ENCODE measurements at regions of chr4 and their contacts with region 1.

Region 1: GRCh38 chr4:183098723-183099536 is at the start of gene WWC2:
- DNase-seq: peak; percentile 96
- H3K4me3 ChIP-seq: peak within 1 kb of the TSS; percentile 82
- H3K4me3 Mint-ChIP-seq: peak within 1 kb of the TSS; percentile 83
- H3K27ac Mint-ChIP-seq: peak within 1 kb of the TSS; percentile 92
- H3K4me1 ChIP-seq: peaks cover 37% of the 10 kb centered on the region
- H3K4me1 Mint-ChIP-seq: peaks cover 40% of the 10 kb centered on the region
- H3K27me3 ChIP-seq: no peaks in the 10 kb centered on the region
- H3K27me3 Mint-ChIP-seq: no peaks in the 10 kb centered on the region
- CTCF ChIP-seq: no peak
- total RNA-seq, gene WWC2: 120 and 126 TPM in 2 replicates

Region 2: DNA sequence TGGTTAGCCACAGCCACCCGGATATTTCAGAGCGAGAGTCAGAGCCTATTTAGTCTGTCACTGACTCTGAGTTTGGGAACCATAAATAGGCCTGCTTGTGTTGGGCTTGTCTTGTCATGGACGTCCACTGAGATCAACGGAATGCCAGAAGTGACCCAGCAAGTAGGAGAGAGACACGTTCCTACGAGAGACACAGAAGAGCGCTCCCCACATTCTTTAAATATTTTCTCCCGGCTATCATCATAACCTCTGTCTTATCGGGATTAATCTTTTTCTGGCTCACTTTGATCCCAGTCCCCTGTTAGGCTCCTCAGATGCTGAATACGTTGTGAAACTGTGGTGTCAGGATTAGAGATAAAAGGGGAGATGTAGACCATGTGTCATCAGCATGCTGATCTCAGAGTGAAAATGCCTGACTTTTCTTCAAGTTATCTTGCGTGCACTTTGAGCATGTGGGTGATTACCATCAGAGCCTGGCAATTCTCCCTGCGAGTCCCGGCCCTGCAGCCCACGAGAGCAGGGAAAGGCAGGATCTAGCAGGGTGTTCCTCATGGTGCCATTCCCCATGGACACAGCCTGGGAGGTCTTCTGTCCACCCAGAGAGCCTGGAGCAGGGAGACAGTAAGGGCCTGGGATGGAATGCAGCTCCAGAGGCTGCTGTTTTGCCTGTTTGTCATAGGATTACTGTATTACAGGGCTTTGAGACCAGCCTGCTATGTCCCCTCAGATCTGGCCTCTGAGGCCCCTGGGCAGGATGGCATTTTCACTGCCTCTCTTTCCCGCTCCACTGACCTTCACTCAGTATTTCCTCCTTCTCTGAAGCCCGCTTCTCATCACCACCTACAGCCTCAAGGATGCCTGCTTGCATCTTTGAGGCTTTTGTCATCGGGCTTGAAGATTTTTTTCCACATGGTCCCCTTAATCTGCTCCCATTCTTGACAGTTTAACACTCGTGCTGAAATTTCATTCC is 858.5 kb before region 1 on chr4:
- CTCF ChIA-PET with region 1: no interaction called
- POLR2A ChIA-PET with region 1: no interaction called
- intact Hi-C with region 1: loop called (anchors 1 kb)
- DNase-seq: peak; percentile 83 to 90
- H3K4me3 ChIP-seq: peak overlapping the region; percentile 21
- H3K4me3 Mint-ChIP-seq: peak overlapping the region; percentile 45
- H3K27ac Mint-ChIP-seq: peak overlapping the region; percentile 96
- H3K4me1 ChIP-seq: peaks cover 57% of the 10 kb centered on the region
- H3K4me1 Mint-ChIP-seq: peaks cover 45% of the 10 kb centered on the region
- H3K27me3 ChIP-seq: no peaks in the 10 kb centered on the region
- H3K27me3 Mint-ChIP-seq: no peaks in the 10 kb centered on the region
- CTCF ChIP-seq: no peak

Region 3: DNA sequence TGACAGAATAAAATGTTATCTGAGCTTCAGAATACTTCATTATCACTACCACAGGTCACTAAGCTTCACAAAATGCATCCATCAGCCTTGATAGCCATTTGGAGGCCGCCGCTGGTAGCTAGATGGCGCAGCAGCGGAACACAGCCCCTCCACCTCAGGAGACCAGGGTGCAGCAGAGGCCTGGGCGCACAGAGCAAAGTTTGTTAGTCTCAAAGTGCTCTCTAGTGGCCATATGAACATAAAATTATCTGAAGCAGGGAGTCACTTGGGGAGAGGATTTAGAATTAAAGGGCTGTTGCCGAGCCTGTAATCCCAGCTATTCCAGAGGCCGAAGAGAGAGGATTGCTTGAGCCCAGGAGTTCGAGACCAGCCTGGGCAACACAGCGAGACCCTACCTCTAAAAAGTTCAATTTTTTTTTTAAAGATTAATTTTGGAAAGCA is 173.6 kb before region 1 on chr4:
- CTCF ChIA-PET with region 1: no interaction called
- POLR2A ChIA-PET with region 1: no interaction called
- intact Hi-C with region 1: no loop called
- DNase-seq: peak; percentile 78 to 84
- H3K4me3 ChIP-seq: no peak overlapping the region
- H3K4me3 Mint-ChIP-seq: no peak overlapping the region
- H3K27ac Mint-ChIP-seq: no peak overlapping the region
- H3K4me1 ChIP-seq: 0 out of 2 replicates have a peak, but pooled peaks cover 7% of the 10 kb centered on the region
- H3K4me1 Mint-ChIP-seq: no peaks in the 10 kb centered on the region
- H3K27me3 ChIP-seq: no peaks in the 10 kb centered on the region
- H3K27me3 Mint-ChIP-seq: no peaks in the 10 kb centered on the region
- CTCF ChIP-seq: peak; percentile 80 to 87

Region 4: DNA sequence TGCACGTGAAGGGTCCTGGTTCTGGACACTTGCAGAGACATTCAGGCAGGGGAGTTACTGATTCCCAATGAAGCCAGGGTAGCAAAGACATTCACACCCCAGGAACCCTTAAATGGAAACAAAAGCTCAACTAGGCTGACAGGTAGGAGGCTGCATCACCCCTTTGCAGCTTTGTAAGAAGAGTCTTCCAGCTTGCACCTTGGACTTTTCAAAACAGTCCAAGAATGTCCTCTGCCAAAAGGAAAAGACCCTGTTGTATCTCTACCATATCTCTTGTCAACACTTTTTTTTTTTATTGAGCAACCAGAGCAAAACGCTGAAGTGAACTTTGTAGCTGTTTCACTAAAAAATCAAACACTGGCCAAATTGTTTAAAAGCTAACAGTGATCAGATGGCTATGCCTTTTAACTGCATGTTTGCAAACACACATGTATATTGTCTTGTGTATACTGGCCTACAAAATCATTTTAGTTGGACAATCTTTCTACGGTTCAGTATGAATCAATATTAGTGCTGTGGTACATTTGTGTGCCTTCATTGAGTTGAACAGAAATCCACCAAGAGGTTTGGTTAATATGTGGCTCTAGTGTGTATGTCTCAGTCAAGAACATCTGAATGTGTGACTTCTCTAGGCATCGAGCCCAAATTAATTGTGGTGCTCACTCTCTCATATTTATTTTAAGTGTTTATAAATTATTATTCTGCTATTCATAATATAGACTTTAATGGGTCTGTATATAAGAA is 18.4 kb before region 1 on chr4:
- CTCF ChIA-PET with region 1: interaction called, 10 read pairs
- POLR2A ChIA-PET with region 1: interaction called, 19 read pairs
- intact Hi-C with region 1: loop called (anchors 1 kb)
- DNase-seq: peak; percentile 53 to 54
- H3K4me3 ChIP-seq: no peak overlapping the region
- H3K4me3 Mint-ChIP-seq: peak overlapping the region; percentile 14
- H3K27ac Mint-ChIP-seq: peak overlapping the region; percentile 18
- H3K4me1 ChIP-seq: peaks cover 61% of the 10 kb centered on the region
- H3K4me1 Mint-ChIP-seq: peaks cover 45% of the 10 kb centered on the region
- H3K27me3 ChIP-seq: no peaks in the 10 kb centered on the region
- H3K27me3 Mint-ChIP-seq: no peaks in the 10 kb centered on the region
- CTCF ChIP-seq: no peak

Region 5: DNA sequence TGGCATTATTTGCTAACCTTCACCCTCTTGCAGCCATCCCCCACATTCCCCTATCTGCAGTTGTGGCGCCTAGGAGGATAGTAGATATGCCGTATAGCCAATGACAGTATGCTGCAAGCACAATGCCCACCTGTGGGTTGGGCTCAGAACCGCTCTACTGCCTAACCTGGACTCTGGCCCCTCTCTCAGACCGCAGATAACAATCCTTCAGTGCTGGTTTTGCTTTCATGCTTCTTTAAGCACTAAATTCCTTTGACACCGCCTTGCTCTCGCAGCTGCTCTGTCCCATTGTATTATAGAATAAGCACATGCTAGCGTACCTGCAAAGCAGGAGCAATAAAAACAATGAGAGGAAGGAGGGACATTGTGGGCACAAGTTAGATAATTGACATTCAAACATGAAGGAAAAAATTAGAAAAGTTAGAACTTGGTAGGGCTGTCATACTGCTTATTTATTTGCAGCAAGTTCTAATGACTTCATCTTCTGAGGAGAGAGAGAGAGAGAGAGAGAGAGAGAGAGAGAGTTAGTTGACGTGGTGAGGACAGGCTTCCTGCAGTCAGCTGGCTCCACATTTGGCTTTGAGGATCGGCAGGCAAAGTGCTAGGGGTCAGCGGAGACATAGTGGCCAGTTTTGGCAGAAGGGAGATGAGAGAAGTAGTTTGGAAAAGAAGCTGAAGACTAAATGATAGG is 55.9 kb after region 1 on chr4:
- CTCF ChIA-PET with region 1: no interaction called
- POLR2A ChIA-PET with region 1: no interaction called
- intact Hi-C with region 1: loop called (anchors 1 kb)
- DNase-seq: peak; percentile 82 to 89
- H3K4me3 ChIP-seq: peak overlapping the region; percentile 29
- H3K4me3 Mint-ChIP-seq: peak overlapping the region; percentile 65
- H3K27ac Mint-ChIP-seq: peak overlapping the region; percentile 66
- H3K4me1 ChIP-seq: peaks cover 52% of the 10 kb centered on the region
- H3K4me1 Mint-ChIP-seq: peaks cover 28% of the 10 kb centered on the region
- H3K27me3 ChIP-seq: no peaks in the 10 kb centered on the region
- H3K27me3 Mint-ChIP-seq: no peaks in the 10 kb centered on the region
- CTCF ChIP-seq: no peak

Region 6: DNA sequence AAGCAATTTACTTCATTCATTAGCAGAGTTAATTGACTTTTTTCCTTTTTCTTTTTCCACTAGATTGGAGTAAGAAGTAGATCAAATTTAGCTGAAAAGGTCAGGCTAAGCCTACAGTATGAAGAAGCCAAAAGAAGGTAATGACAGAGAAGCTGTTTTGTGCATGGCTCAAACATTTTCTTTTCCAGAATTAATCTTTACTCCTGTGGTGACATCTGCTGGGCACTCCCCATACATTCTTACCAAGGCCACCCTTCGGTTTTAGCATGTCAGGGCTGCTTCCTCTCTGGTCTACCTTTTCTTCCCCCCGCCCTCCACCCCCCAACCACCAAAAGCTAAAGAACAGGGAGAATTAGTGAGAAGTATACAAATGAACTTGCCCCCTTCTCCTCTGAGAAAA is 150.9 kb after region 1 on chr4:
- CTCF ChIA-PET with region 1: no interaction called
- POLR2A ChIA-PET with region 1: no interaction called
- intact Hi-C with region 1: loop called (anchors 1 kb)
- DNase-seq: peak in 1 of 2 experiments; percentile 35
- H3K4me3 ChIP-seq: no peak overlapping the region
- H3K4me3 Mint-ChIP-seq: no peak overlapping the region
- H3K27ac Mint-ChIP-seq: no peak overlapping the region
- H3K4me1 ChIP-seq: peaks cover 25% of the 10 kb centered on the region
- H3K4me1 Mint-ChIP-seq: peaks cover 9% of the 10 kb centered on the region
- H3K27me3 ChIP-seq: no peaks in the 10 kb centered on the region
- H3K27me3 Mint-ChIP-seq: no peaks in the 10 kb centered on the region
- CTCF ChIP-seq: peak in 1 of 2 experiments; percentile 24

Region 7: DNA sequence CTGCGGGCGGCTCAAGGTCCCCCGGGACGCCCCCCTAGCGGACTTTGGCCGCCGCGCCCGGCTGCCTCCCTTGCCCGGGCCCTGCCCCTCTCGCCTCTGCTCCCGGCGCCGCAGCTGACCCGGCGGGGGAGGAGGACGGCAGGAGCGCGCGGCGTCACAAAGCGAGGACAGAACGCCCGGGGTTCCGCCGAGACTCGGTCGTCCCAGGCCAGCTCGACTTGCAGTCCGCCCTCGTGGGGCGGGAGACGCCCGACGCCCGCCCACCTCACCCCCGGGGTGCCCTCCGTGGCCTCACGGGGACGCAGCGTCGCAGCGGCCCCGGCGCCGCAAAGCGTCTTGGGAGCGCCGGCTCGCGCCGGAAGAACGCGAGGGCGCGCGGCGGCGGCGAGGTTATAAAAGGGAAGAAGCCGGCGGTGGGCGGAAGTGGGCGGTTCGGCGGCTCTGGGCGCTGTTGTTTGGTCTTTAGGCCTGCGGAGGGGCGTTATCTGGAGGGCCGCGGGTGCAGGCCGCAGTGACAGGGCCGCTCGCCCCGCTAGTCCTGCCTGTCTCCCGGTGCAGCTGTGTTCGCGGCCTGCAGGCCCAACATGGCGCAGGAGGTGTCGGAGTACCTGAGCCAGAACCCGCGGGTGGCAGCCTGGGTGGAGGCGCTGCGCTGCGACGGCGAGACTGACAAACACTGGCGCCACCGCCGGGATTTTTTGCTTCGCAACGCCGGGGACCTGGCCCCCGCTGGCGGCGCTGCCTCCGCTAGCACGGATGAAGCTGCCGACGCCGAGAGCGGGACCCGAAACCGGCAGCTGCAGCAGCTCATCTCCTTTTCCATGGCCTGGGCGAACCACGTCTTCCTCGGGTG is 345.5 kb after region 1 on chr4 and contains the start of gene CDKN2AIP:
- CTCF ChIA-PET with region 1: no interaction called
- POLR2A ChIA-PET with region 1: no interaction called
- intact Hi-C with region 1: loop called (anchors 10 kb)
- DNase-seq: peak; percentile 94
- H3K4me3 ChIP-seq: peak within 1 kb of the TSS; percentile 93
- H3K4me3 Mint-ChIP-seq: peak within 1 kb of the TSS; percentile 93
- H3K27ac Mint-ChIP-seq: peak within 1 kb of the TSS; percentile 94
- H3K4me1 ChIP-seq: peaks cover 39% of the 10 kb centered on the region
- H3K4me1 Mint-ChIP-seq: peaks cover 14% of the 10 kb centered on the region
- H3K27me3 ChIP-seq: no peaks in the 10 kb centered on the region
- H3K27me3 Mint-ChIP-seq: no peaks in the 10 kb centered on the region
- CTCF ChIP-seq: peak in 1 of 2 experiments; percentile 12
- total RNA-seq, gene CDKN2AIP: 13.9 and 17.5 TPM in 2 replicates

Region 8: DNA sequence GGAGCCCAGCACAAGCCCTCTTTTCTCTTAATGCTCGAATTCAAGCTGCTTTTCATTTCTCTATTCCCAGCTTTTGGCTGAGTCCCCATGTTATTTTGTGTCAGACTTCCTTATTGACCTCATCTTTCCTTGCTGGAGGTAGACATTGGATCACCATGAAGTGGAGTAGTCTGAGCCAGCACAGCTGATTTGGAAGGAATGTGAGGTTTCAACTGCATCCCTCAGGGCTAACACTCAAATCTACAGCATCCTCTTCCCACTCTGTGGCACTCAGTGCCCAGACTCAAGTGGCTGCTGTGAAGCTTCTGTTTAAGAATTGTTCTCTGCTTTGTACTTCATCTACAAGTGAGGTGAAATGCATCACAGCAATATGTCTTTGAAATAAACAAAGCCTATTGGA is 566.5 kb after region 1 on chr4:
- CTCF ChIA-PET with region 1: no interaction called
- POLR2A ChIA-PET with region 1: no interaction called
- intact Hi-C with region 1: no loop called
- DNase-seq: no peak
- H3K4me3 ChIP-seq: no peak overlapping the region
- H3K4me3 Mint-ChIP-seq: no peak overlapping the region
- H3K27ac Mint-ChIP-seq: no peak overlapping the region
- H3K4me1 ChIP-seq: no peaks in the 10 kb centered on the region; the same call in 1 of the 2 replicates
- H3K4me1 Mint-ChIP-seq: no peaks in the 10 kb centered on the region
- H3K27me3 ChIP-seq: no peaks in the 10 kb centered on the region
- H3K27me3 Mint-ChIP-seq: no peaks in the 10 kb centered on the region
- CTCF ChIP-seq: no peak